ENCODE measurements at regions of chr1 and their contacts with region 1.

Region 1: GRCh38 chr1:43650310-43651085 is 549 bp downstream of the KDM4A start:
- DNase-seq: peak; percentile 94 to 97 (median 97)
- H3K4me3 ChIP-seq: peak overlapping the region; percentile 55 to 94 (median 91)
- H3K4me3 Mint-ChIP-seq: peak overlapping the region; percentile 93 to 98
- H3K27ac ChIP-seq: peak overlapping the region; percentile 82 to 94
- H3K27ac Mint-ChIP-seq: peak overlapping the region; percentile 94 to 99 (median 98)
- H3K4me1 ChIP-seq: peaks cover 22 to 29% of the 10 kb centered on the region in 2 donors
- H3K4me1 Mint-ChIP-seq: peaks cover 37% of the 10 kb centered on the region
- H3K27me3 ChIP-seq: no peaks in the 10 kb centered on the region
- H3K27me3 Mint-ChIP-seq: peaks cover 0 to 7% (median 0%) of the 10 kb centered on the region in 3 donors
- CTCF ChIP-seq: no peak

Region 2: DNA sequence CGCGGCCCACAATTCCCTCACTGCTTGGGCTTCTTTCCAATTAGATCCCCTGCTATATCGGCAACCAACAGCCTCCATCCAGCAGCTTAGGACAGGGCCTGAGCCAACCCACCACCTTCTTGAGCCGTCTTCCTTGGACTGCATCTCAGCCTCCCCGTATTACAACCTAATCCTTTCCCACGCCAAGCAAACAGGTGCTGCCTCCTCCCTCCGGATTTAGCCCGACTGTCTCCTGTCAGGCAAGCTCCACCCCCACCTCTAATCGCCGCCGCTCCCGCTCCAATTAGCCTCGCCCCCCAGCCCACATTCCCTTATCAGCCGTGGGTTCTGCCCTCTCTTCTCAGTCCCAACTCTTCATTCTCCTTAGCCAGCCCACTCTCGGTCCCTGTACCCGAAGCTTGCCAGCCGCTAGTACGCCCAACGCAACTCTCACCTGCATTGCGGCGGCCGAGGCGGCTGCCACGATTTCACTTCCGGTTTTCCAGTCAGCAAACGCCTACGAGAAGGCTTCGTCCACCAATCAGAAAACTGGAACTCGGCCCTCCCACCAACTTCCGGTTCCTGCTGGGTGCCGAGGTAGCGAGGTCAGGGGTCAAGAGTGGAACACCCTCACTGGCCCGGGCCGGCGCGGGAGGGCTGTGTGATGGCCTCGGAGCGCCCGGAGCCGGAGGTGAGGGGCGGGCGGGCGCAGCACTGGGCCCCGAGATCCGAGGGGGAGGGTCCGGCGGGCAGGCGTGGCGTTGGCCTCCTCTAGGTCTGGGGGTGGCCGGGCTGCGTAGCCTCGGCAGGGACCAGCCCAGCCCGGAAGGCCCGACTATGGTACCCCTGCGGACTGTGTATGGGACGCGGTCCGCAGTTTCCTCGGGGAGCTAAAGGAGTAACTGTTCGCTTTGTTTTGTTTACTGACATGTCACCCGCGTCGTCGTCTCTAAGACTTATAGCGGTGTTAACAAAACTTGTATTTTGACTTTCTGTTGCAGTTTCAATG is 260.9 kb before region 1 on chr1 and contains the starts of genes MED8 and SZT2:
- intact Hi-C with region 1: loop called in 1 of 2 experiments (anchors 10 kb)
- DNase-seq: peak; percentile 94 to 98 (median 96)
- H3K4me3 ChIP-seq: peak within 1 kb of the TSS; percentile 54 to 94 (median 78)
- H3K4me3 Mint-ChIP-seq: peak within 1 kb of the TSS; percentile 100
- H3K27ac ChIP-seq: peak within 1 kb of the TSS; percentile 24 to 88
- H3K27ac Mint-ChIP-seq: peak within 1 kb of the TSS; percentile 97 to 100 (median 98)
- H3K4me1 ChIP-seq: peaks cover 18 to 30% of the 10 kb centered on the region in 2 donors
- H3K4me1 Mint-ChIP-seq: peaks cover 26% of the 10 kb centered on the region
- H3K27me3 ChIP-seq: no peaks in the 10 kb centered on the region
- H3K27me3 Mint-ChIP-seq: no peaks in the 10 kb centered on the region
- CTCF ChIP-seq: no peak
- polyA plus RNA-seq, gene MED8: 16.6 to 41.8 (median 40.7) TPM
- polyA plus RNA-seq, gene SZT2: 2.4 to 29.9 (median 2.6) TPM

Region 3: GRCh38 chr1:43706598-43707495 is 56.3 kb after region 1 on chr1:
- intact Hi-C with region 1: loop called (anchors 2 to 5 kb)
- DNase-seq: peak; percentile 84 to 87 (median 87)
- H3K4me3 ChIP-seq: peak overlapping the region; percentile 38 to 89 (median 66)
- H3K4me3 Mint-ChIP-seq: peak overlapping the region; percentile 83 to 89
- H3K27ac ChIP-seq: peak overlapping the region in 1 of 2 donors; percentile 80
- H3K27ac Mint-ChIP-seq: peak overlapping the region; percentile 20 to 85 (median 70)
- H3K4me1 ChIP-seq: peaks cover 27 to 37% of the 10 kb centered on the region in 2 donors
- H3K4me1 Mint-ChIP-seq: peaks cover 44% of the 10 kb centered on the region
- H3K27me3 ChIP-seq: no peaks in the 10 kb centered on the region
- H3K27me3 Mint-ChIP-seq: no peaks in the 10 kb centered on the region
- CTCF ChIP-seq: no peak

Region 4: DNA sequence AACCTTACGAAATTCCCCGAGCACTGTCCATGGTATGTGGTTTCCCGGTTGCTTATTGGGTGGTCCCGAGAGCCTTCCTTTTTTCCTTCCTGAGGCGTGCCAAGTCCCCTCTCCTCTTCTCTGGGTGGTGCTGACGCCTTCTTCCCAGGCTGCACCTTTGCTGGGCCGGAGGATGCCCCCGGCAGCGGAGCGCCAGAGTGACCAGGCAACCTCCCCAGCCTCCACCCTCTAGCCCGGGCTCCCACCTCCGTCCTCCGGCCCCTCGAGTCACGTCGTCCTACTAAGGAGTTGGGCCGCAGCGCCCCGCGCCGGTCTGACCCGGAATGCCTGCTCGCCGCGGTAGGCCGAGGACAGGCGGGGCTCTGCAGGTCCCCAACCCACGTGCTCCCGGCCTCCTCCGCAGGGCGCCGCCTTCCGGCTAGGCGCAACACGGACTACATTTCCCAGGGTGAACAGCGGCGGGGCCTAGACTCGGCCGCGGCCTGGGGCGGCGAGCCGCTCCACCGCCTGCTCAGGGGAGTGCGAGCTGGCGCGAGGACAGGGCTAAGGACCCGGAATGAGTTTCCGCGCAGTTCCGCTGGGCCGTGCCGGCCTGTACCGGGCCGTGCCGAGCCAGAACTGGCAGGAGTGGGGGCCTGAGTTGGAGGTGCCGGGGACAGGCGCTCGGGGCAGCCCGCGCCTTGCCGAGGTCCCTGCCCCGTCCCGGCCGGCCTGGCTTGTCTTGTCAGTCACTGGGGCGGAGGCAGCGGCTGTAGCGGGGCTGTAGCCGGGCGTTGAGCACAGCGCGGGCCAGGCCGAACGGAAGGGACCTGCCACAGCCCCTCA is 295.9 kb after region 1 on chr1 and contains the start of gene IPO13:
- intact Hi-C with region 1: loop called in 1 of 2 experiments (anchors 10 kb)
- DNase-seq: peak; percentile 90 to 96 (median 94)
- H3K4me3 ChIP-seq: peak within 1 kb of the TSS; percentile 61 to 91 (median 66)
- H3K4me3 Mint-ChIP-seq: peak within 1 kb of the TSS; percentile 88 to 95
- H3K27ac ChIP-seq: peak within 1 kb of the TSS; percentile 30 to 98
- H3K27ac Mint-ChIP-seq: peak within 1 kb of the TSS; percentile 90 to 98 (median 97)
- H3K4me1 ChIP-seq: peaks cover 20 to 25% of the 10 kb centered on the region in 2 donors
- H3K4me1 Mint-ChIP-seq: peaks cover 49% of the 10 kb centered on the region
- H3K27me3 ChIP-seq: no peaks in the 10 kb centered on the region
- H3K27me3 Mint-ChIP-seq: no peaks in the 10 kb centered on the region
- CTCF ChIP-seq: peak; percentile 81
- polyA plus RNA-seq, gene IPO13: 10.1 to 20.4 (median 10.6) TPM

Region 5: DNA sequence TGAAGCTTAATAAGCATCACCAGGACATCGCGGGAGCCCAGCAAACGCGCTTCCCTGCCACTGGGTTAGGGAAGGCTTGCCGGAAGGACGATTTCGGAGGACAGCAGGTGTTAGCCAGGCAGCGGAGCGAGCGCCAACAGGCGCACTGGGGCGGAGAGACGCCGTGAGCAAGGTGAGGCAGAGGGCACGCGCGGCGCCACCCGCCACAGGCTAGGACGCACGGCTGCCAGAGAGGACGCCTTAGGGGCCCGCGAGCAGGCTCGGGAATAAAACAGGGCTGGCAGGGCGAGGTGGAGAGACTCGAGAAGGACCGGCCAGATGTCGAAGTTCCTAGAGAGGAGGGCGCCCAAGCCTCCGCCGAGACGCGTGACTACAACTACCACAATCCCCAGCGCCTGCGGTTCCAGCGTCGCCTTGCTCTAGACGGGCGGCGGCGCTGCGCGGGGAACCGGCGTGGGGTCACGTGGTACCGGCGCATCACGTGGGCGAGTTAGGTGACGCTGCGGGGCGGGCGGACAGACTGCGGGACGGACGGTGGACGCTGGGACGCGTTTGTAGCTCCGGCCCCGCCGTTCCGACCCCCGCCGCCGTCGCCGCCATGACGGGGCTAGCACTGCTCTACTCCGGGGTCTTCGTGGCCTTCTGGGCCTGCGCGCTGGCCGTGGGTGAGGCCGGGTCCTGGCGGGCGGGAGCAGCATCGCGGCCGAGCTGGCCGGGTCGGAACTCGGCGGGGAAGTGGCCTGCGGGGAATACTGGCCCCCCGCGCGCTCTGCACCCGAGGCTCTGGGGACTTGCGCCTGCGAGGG is 324.1 kb after region 1 on chr1 and contains the start of gene ATP6V0B:
- intact Hi-C with region 1: loop called in 1 of 2 experiments (anchors 10 kb)
- DNase-seq: peak; percentile 94 to 95 (median 94)
- H3K4me3 ChIP-seq: peak within 1 kb of the TSS; percentile 86 to 98 (median 97)
- H3K4me3 Mint-ChIP-seq: peak within 1 kb of the TSS; percentile 98 to 99
- H3K27ac ChIP-seq: peak within 1 kb of the TSS; percentile 97 to 99
- H3K27ac Mint-ChIP-seq: peak within 1 kb of the TSS; percentile 95 to 97 (median 96)
- H3K4me1 ChIP-seq: peaks cover 50 to 59% of the 10 kb centered on the region in 2 donors
- H3K4me1 Mint-ChIP-seq: peaks cover 53% of the 10 kb centered on the region
- H3K27me3 ChIP-seq: no peaks in the 10 kb centered on the region
- H3K27me3 Mint-ChIP-seq: peaks cover 2 to 8% (median 2%) of the 10 kb centered on the region in 3 donors
- CTCF ChIP-seq: peak; percentile 21
- polyA plus RNA-seq, gene ATP6V0B: 465 to 1,219 (median 954) TPM

Region 6: DNA sequence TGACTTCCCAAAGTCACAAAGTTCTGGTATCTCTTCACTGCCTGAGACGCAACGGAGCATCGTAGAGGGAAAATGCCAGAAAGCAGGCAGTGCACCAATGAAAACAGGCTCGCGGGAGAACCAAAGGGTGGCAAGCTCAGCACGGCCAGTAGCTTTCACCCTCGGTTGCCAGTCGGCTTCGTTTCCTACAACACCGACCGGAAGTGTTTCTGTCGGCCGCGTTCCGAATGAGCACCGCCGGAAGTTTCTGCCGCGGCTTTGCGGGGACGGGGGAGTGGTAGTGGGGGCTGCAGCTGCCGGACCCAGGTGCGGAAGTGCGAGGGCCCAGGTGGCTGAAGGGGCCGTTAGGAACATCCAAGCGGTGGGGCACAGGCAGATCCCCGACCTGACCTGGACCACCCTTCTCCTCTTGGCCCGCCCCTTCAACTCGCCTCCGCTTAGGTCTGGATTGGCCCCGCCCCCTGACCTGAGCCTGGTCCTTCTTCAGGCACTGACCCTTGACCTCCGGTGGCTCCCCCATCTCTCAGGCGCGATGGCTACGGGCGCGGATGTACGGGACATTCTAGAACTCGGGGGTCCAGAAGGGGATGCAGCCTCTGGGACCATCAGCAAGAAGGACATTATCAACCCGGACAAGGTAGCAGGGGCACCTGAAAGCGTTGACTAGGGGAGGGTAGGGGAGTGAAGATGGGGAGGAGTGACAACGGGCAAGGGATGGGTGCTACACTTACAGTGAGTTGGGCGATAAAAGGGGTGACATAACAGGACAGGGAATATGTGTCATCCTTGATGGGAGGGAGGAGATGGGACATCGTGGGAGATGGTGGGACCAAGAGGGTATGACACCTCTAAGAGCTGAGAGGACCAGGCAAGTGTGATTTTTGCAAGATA is 563.0 kb after region 1 on chr1 and contains the start of gene DMAP1:
- intact Hi-C with region 1: loop called in 1 of 2 experiments (anchors 10 kb)
- DNase-seq: peak; percentile 80 to 84 (median 83)
- H3K4me3 ChIP-seq: peak within 1 kb of the TSS; percentile 72 to 98 (median 78)
- H3K4me3 Mint-ChIP-seq: peak within 1 kb of the TSS; percentile 91 to 95
- H3K27ac ChIP-seq: peak within 1 kb of the TSS in 1 of 2 donors; percentile 79
- H3K27ac Mint-ChIP-seq: peak within 1 kb of the TSS; percentile 66 to 95 (median 88)
- H3K4me1 ChIP-seq: peaks cover 17 to 22% of the 10 kb centered on the region in 2 donors
- H3K4me1 Mint-ChIP-seq: peaks cover 17% of the 10 kb centered on the region
- H3K27me3 ChIP-seq: no peaks in the 10 kb centered on the region
- H3K27me3 Mint-ChIP-seq: peaks cover 0 to 6% (median 1%) of the 10 kb centered on the region in 3 donors
- CTCF ChIP-seq: no peak
- polyA plus RNA-seq, gene DMAP1: 18.9 to 51.4 (median 21.3) TPM

Measured in CD14-positive monocyte (primary cell).